K562 (cell line): ENCODE measurements at regions of chr7 and their contacts with region 1.

Region 1: GRCh38 chr7:100691676-100692577 is 2.1 kb downstream of the GIGYF1 start:
- DNase-seq: peak; percentile 82 to 95 (median 88)
- ATAC-seq: peak; percentile 91
- H3K4me3 ChIP-seq: peak overlapping the region; percentile 92
- H3K27ac ChIP-seq: peak overlapping the region; percentile 56
- H3K4me1 ChIP-seq: peaks cover 17 to 60% of the 10 kb centered on the region in 2 experiments
- H3K27me3 ChIP-seq: no peaks in the 10 kb centered on the region
- CTCF ChIP-seq: peak; percentile 92 to 96 (median 94)
- EP300 ChIP-seq: no peak
- POLR2A ChIP-seq: 0 out of 2 replicates have a peak, but pooled peaks have one; percentile 34
- RAD21 ChIP-seq: peak; percentile 85 to 88

Region 2: DNA sequence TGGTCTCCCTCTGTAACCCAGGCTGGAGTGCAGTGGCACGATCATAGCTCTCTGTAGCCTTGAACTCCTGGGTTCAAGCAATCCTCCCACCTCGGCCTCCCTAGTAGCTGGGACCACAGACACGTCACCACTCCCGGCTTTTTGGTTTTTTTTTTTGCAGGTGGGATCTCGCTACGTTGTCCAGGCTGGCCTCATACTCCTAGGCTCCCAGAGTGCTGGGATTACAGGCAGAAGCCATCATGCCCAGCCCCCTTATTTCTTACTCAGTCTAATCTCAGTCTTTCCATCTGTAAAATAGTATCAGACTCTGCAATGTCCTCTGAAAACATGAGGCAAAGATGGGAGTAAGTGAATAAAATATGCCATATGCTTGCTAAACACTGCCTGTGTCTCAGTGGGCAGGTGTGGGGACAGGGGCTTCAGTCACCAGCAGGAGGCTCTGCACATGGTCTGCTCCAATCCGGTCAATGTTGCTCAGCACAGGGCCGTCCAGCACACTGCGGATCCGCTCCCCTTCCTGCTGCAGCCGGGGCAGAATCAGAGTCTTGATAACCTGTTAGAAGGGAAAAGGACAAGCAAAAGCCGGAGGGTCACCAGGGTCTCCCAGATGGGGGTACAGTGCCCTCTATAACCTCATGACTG is 582.3 kb before region 1 on chr7:
- CTCF ChIA-PET with region 1: no interaction called
- POLR2A ChIA-PET with region 1: no interaction called
- in situ Hi-C with region 1: no loop called
- intact Hi-C with region 1: no loop called
- DNase-seq: peak in 1 of 4 experiments; percentile 15
- ATAC-seq: peak; percentile 57
- H3K4me3 ChIP-seq: no peak overlapping the region
- H3K27ac ChIP-seq: no peak overlapping the region
- H3K4me1 ChIP-seq: peaks cover 2 to 31% of the 10 kb centered on the region in 2 experiments; a peak in 4 of 5 replicates
- H3K27me3 ChIP-seq: no peaks in the 10 kb centered on the region
- CTCF ChIP-seq: peak in 2 of 3 experiments; percentile 18 to 23; a peak in 3 of 6 replicates
- EP300 ChIP-seq: no peak
- POLR2A ChIP-seq: no peak
- RAD21 ChIP-seq: no peak

Region 3: DNA sequence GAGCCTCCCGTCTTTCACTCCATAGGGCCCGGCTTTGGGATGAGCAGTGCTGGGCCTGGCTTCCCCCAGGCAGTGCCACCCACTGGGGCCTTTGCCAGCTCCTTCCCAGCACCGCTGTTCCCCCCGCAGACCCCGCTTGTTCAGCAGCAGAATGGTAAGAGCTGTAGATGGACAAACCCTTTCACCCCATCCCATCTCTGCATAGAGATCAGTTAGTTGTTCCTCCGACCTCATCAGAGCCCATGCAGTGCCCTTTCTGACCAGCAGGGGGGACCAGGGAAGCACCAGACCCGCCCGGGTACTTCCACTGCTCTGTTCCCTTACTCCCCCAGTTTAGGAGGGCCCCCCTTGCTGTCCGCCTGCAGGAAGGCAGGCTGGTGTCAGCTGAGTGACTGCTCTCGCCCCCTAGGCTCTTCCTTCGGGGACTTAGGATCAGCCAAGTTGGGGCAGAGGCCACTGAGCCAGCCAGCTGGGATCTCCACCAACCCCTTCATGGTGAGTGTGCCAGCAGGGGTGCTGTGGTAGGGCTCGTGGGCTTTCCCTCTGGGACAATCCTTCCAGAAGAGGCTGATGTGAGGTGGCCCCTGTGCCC is 128.0 kb before region 1 on chr7:
- CTCF ChIA-PET with region 1: interaction called, 5 read pairs
- POLR2A ChIA-PET with region 1: no interaction called
- in situ Hi-C with region 1: no loop called
- intact Hi-C with region 1: loop called (anchors 1 kb)
- DNase-seq: peak; percentile 87 to 94 (median 90)
- ATAC-seq: peak; percentile 82
- H3K4me3 ChIP-seq: no peak overlapping the region
- H3K27ac ChIP-seq: no peak overlapping the region
- H3K4me1 ChIP-seq: peaks cover 5 to 38% of the 10 kb centered on the region in 2 experiments; a peak in 4 of 5 replicates
- H3K27me3 ChIP-seq: no peaks in the 10 kb centered on the region
- CTCF ChIP-seq: peak; percentile 92 to 99 (median 96)
- EP300 ChIP-seq: no peak
- POLR2A ChIP-seq: no peak
- RAD21 ChIP-seq: peak; percentile 74 to 92

Region 4: GRCh38 chr7:100595188-100595587 is 96.7 kb before region 1 on chr7:
- CTCF ChIA-PET with region 1: no interaction called
- POLR2A ChIA-PET with region 1: no interaction called
- in situ Hi-C with region 1: no loop called
- intact Hi-C with region 1: no loop called
- DNase-seq: no peak
- ATAC-seq: no peak
- H3K4me3 ChIP-seq: no peak overlapping the region
- H3K27ac ChIP-seq: no peak overlapping the region
- H3K4me1 ChIP-seq: peaks cover 0 to 7% of the 10 kb centered on the region in 2 experiments; a peak in 3 of 5 replicates
- H3K27me3 ChIP-seq: no peaks in the 10 kb centered on the region
- CTCF ChIP-seq: no peak
- EP300 ChIP-seq: no peak
- POLR2A ChIP-seq: no peak
- RAD21 ChIP-seq: no peak

Region 5: DNA sequence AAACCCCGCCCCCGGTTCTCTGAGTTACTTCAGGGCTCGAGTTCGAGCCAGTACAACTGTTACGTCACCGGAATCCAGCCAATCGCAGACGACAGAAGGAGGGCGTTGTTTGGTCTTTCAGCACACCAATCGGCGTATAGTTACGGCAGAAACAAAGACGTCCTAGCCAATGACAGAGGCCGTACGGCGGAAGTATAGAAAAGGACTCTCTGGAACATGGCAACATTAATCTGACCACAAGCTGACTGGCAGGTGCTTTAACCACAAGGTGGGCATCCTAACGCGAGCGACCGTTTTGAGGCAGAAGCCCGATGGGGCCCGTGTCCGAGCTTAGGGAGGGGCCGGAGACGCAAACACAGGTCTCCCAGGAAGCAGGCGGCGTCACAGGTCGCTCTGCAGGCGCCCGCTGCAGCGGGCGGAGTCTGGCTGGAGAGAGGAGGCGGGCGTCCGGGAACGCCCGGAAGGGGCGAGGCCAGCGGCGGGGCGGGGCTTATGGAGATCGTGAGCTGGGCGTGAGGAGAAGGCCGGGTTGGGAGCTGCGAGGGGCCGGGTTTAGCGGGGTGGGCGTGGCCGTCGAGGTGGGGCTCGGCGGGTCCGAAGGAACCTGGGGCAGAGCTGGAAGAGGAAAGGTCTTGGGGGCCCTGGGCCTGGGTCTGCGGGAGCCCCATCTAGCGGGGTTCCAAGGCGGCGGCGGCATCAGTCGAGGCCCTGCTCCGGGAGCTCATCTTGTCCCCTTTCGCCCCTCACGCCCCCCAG is 79.8 kb before region 1 on chr7 and contains the start of gene MOSPD3:
- CTCF ChIA-PET with region 1: interaction called, 3 read pairs
- POLR2A ChIA-PET with region 1: interaction called, 3 read pairs
- in situ Hi-C with region 1: no loop called
- intact Hi-C with region 1: loop called (anchors 2 kb)
- DNase-seq: peak; percentile 99 to 100 (median 100)
- ATAC-seq: peak; percentile 98
- H3K4me3 ChIP-seq: peak within 1 kb of the TSS; percentile 52
- H3K27ac ChIP-seq: peak within 1 kb of the TSS; percentile 78
- H3K4me1 ChIP-seq: peaks cover 19 to 28% of the 10 kb centered on the region in 2 experiments; a peak in 4 of 5 replicates
- H3K27me3 ChIP-seq: no peaks in the 10 kb centered on the region
- CTCF ChIP-seq: 0 out of 6 replicates have a peak, but pooled peaks of 1 of the 3 experiments have one; percentile 1
- EP300 ChIP-seq: peak; percentile 25; the same call in 1 of the 2 replicates
- POLR2A ChIP-seq: peak; percentile 97
- RAD21 ChIP-seq: no peak; a peak in 1 of 4 replicates
- polyA plus RNA-seq, gene MOSPD3: 1.4 to 2.6 TPM

Region 6: DNA sequence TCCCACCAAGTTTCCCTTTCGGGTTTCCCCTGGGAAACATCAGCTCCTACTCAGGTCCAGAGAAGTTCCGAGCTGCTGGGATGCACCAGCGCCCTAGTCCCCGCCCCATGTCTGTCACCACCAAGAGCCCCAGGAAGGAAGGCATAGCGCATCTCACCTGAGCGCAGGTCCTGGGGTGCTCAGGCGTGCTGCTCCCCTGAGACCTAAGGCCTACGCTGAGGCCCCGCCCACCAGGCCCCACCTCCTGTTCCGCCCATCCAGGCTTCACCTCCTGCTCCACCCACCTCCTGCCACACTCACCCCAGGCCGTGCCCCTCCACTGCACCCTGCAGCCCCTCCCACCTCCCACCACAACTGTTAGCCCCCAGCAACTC is 49.4 kb before region 1 on chr7:
- CTCF ChIA-PET with region 1: no interaction called
- POLR2A ChIA-PET with region 1: no interaction called
- in situ Hi-C with region 1: no loop called
- intact Hi-C with region 1: loop called (anchors 5 kb)
- DNase-seq: peak; percentile 92 to 98 (median 96)
- ATAC-seq: peak; percentile 80
- H3K4me3 ChIP-seq: peak overlapping the region; percentile 55
- H3K27ac ChIP-seq: peak overlapping the region; percentile 98
- H3K4me1 ChIP-seq: peaks cover 25 to 55% of the 10 kb centered on the region in 2 experiments
- H3K27me3 ChIP-seq: no peaks in the 10 kb centered on the region
- CTCF ChIP-seq: 0 out of 6 replicates have a peak, but pooled peaks of 1 of the 3 experiments have one; percentile 1
- EP300 ChIP-seq: no peak
- POLR2A ChIP-seq: peak; percentile 76
- RAD21 ChIP-seq: no peak

Region 7: GRCh38 chr7:100852048-100852872 is 160.3 kb after region 1 on chr7 and contains the start of gene SLC12A9:
- CTCF ChIA-PET with region 1: interaction called, 3 read pairs
- POLR2A ChIA-PET with region 1: interaction called, 3 read pairs
- in situ Hi-C with region 1: no loop called
- intact Hi-C with region 1: loop called (anchors 5 kb)
- DNase-seq: peak; percentile 97 to 98 (median 98)
- ATAC-seq: peak; percentile 100
- H3K4me3 ChIP-seq: peak within 1 kb of the TSS; percentile 62
- H3K27ac ChIP-seq: no peak within 1 kb of the TSS; the same call in 2 of the 3 replicates
- H3K4me1 ChIP-seq: peaks cover 4 to 32% of the 10 kb centered on the region in 2 experiments; a peak in 4 of 5 replicates
- H3K27me3 ChIP-seq: no peaks in the 10 kb centered on the region
- CTCF ChIP-seq: peak; percentile 96 to 99 (median 96)
- EP300 ChIP-seq: no peak
- POLR2A ChIP-seq: peak; percentile 54; the same call in 1 of the 2 replicates
- RAD21 ChIP-seq: peak; percentile 98
- polyA plus RNA-seq, gene SLC12A9: 0.06 to 0.17 TPM